Posterior vena cava (tissue), 2 donors: ENCODE measurements at regions of chr22 and their contacts with region 1.

Region 1: GRCh38 chr22:40305625-40306024 is 40.7 kb upstream of the ADSL start:
- DNase-seq: no peak

Region 2: DNA sequence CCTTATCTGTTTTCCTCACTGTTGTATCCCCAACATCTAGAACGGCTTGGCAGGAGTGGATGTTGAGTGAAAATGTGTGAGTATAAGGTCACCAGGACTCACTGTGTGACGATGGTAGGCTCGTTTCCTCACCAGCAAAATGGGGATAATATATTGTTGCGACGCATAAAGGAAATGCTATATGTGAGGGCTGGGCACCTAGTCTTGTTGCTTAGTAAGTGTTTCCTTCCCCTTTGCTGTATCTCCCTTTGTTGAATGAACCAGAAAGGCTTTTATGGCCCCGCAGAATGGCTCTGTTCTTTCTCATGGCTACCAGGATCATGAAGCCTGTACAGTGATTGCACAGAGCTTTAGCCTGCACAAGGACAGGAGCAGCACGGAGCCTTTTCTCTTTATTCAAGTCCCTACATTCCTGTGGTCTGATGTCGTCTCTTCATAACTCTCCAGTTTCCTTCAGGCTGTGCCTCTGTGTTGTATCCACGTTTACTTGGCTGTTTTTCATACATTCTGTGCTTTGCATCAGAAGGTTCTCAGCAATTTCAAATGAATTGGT is 122.5 kb before region 1 on chr22:
- intact Hi-C with region 1: no loop called
- DNase-seq: no peak

Region 3: GRCh38 chr22:40279017-40279416 is 26.6 kb before region 1 on chr22:
- intact Hi-C with region 1: loop called in 1 of 2 experiments (anchors 2 kb)
- DNase-seq: no peak